ENCODE measurements at regions of chr1 and their contacts with region 1.

Region 1: GRCh38 chr1:39098546-39099250 is 72.5 kb downstream of the NDUFS5 start:
- DNase-seq: peak; percentile 70
- H3K4me3 ChIP-seq: no peak overlapping the region
- H3K27me3 ChIP-seq: no peaks in the 10 kb centered on the region
- CTCF ChIP-seq: peak; percentile 80

Region 2: GRCh38 chr1:39086865-39087409 is 11.8 kb before region 1 on chr1:
- CTCF ChIA-PET with region 1: interaction called, 17 read pairs
- POLR2A ChIA-PET with region 1: no interaction called
- DNase-seq: no peak
- H3K4me3 ChIP-seq: no peak overlapping the region
- H3K27me3 ChIP-seq: peaks cover 9% of the 10 kb centered on the region
- CTCF ChIP-seq: no peak

Region 3: GRCh38 chr1:39110325-39110851 is 11.7 kb after region 1 on chr1:
- CTCF ChIA-PET with region 1: interaction called, 14 read pairs
- POLR2A ChIA-PET with region 1: no interaction called
- DNase-seq: peak; percentile 65
- H3K4me3 ChIP-seq: no peak overlapping the region
- H3K27me3 ChIP-seq: no peaks in the 10 kb centered on the region
- CTCF ChIP-seq: no peak

Region 4: GRCh38 chr1:39149509-39149908 is 50.8 kb after region 1 on chr1:
- CTCF ChIA-PET with region 1: no interaction called
- POLR2A ChIA-PET with region 1: no interaction called
- DNase-seq: no peak
- H3K4me3 ChIP-seq: no peak overlapping the region
- H3K27me3 ChIP-seq: no peaks in the 10 kb centered on the region
- CTCF ChIP-seq: no peak

Region 5: DNA sequence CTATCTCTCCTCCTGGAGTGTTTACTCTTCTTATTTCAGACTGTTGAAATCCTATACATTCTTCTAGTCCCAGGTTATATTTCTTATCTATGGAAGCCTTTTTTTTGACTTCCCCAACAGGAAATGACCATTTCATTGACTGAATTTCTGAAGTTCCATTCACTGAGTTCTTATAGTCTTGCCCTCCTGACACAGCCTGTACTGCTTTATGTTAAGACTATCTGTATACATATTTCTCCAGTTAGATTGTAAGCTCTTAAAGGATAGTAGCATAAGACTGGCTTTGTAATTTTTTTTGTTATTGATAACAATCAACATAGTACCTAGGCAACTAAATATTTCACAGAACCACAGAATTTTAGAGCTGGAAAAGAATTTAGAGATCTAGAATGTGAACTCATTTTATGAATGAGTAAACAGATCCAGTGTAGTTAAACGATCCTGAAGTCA is 90.9 kb after region 1 on chr1:
- CTCF ChIA-PET with region 1: interaction called, 55 read pairs
- POLR2A ChIA-PET with region 1: interaction called, 4 read pairs
- DNase-seq: peak; percentile 68
- H3K4me3 ChIP-seq: no peak overlapping the region
- H3K27me3 ChIP-seq: no peaks in the 10 kb centered on the region
- CTCF ChIP-seq: no peak

Region 6: DNA sequence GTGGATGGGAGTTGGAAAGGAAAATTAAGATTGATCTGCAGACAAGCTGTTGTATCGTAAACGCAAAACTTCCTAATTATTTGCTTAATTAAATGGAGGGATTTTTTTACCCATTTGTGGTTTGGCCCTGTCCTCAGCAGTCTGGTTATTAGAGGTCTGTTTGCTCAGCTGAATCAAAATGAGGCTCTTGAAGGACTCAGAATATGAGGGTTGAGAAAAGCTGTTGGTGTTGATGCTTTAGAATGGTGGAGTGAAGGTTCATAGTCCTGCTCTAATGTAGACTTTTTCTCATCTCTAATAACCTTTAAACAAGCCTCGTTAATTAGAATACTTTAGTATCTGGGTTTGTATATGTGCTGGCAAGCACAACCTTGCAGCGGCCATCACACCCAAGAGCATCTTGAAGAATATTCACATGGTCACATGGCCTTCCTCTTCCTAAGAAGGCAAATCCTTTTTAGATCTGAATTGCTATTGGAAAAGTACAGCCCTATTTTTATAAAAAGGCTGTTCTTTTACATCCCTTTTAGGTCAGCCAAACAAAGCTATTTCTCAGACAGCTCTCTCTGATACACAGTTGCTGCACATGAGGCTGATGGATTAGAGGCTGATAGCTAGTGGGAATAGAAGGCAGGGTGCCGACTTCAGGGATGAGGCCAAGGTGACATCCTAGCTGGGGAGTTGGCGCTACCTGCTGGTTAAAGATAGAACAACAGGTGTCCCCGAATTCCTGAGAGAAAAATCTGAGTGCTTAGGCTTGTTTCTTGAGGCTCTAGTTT is 159.6 kb after region 1 on chr1:
- CTCF ChIA-PET with region 1: interaction called, 14 read pairs
- POLR2A ChIA-PET with region 1: no interaction called
- DNase-seq: peak; percentile 3
- H3K4me3 ChIP-seq: no peak overlapping the region
- H3K27me3 ChIP-seq: no peaks in the 10 kb centered on the region
- CTCF ChIP-seq: peak; percentile 85

Region 7: DNA sequence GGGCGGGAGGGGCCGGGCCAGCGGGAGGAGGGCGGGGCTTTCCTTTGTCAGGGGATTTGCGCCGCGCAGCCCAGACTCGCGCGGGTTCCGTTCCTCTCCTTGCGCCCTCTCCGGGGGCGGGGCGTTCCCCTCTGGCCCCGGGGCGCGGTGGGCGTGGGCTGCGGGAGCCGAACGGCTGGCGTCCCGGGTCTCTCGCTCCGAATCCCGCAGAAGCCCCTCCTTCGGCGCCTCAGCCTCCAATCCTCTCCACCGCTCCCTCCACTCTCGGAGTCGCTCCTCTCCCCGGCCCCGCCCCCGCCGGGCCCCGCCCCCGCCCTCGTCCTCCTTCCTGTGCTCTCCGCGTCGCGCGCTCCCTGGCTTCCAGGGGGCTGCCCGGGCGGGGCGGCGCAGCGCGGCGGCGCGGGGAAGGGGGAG is 309.9 kb after region 1 on chr1:
- CTCF ChIA-PET with region 1: interaction called, 13 read pairs
- POLR2A ChIA-PET with region 1: no interaction called
- DNase-seq: peak; percentile 87
- H3K4me3 ChIP-seq: peak overlapping the region; percentile 74
- H3K27me3 ChIP-seq: no peaks in the 10 kb centered on the region
- CTCF ChIP-seq: no peak

Region 8: DNA sequence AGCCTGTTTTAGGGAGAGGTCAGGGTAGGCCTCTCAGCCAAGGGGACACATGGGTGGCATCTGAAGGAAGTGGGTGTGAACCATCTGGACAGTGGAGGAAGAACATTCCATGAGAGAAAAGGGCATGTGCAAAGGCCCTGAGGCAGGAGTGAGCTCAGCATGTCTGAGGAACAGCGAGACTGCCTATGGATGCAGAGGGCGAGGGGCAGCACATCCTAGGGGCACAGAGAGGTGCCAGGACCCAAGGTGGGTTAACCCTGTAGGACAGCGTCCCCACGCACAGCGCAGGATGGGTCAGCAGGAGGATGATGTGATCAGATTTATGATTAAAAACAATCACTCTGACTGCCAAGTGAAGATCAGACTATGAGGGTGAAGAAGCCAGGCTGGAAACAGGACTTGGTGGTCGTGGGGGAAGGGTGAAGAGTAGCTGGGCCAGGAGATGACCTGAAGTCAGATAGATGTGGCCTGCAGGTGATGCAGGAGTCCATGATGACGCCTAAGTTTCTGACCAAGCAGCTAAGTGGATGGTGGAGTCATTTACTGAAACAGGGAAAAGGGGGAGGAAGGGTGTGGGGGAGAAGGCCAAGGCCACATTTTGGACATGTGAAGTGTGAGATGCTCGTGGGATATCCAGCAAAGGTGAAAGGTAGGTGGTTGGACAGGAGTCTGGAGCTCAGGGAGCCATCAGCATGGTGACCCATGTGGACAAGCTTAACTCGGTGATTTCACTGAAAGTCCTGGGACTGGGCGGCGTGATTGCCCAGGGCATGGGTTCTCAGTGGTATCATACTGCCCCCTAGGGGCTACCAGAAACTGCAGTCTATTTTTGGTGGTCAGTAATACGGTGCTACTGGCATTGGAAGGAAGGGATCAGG is 440.1 kb after region 1 on chr1:
- CTCF ChIA-PET with region 1: interaction called, 54 read pairs
- POLR2A ChIA-PET with region 1: no interaction called
- DNase-seq: no peak
- H3K4me3 ChIP-seq: no peak overlapping the region
- H3K27me3 ChIP-seq: no peaks in the 10 kb centered on the region
- CTCF ChIP-seq: peak; percentile 91

Measured in BJ (cell line).